Esophagus muscularis mucosa (tissue), 4 donors: ENCODE measurements at regions of chr4 and their contacts with region 1.

Region 1: GRCh38 chr4:168877511-168878491 is 132.3 kb downstream of the CBR4 start:
- DNase-seq: no peak
- H3K4me3 ChIP-seq: peak overlapping the region; percentile 53 to 64 (median 56)
- H3K27ac ChIP-seq: peak overlapping the region; percentile 84 to 90 (median 87)
- H3K4me1 ChIP-seq: peaks cover 57 to 100% (median 99%) of the 10 kb centered on the region in 4 donors
- H3K27me3 ChIP-seq: no peaks in the 10 kb centered on the region
- CTCF ChIP-seq: no peak
- EP300 ChIP-seq: no peak
- POLR2A ChIP-seq: no peak

Region 2: GRCh38 chr4:168841000-168841671 is 36.7 kb before region 1 on chr4:
- intact Hi-C with region 1: loop called (anchors 5 kb)
- DNase-seq: no peak
- H3K4me3 ChIP-seq: peak overlapping the region; percentile 4 to 89 (median 52)
- H3K27ac ChIP-seq: peak overlapping the region; percentile 97 to 99 (median 99)
- H3K4me1 ChIP-seq: peaks cover 69 to 99% (median 97%) of the 10 kb centered on the region in 4 donors
- H3K27me3 ChIP-seq: no peaks in the 10 kb centered on the region
- CTCF ChIP-seq: no peak
- EP300 ChIP-seq: no peak
- POLR2A ChIP-seq: no peak

Region 3: GRCh38 chr4:168857546-168858314 is 20.1 kb before region 1 on chr4:
- intact Hi-C with region 1: loop called (anchors 1 kb)
- DNase-seq: no peak
- H3K4me3 ChIP-seq: peak overlapping the region in 2 of 4 donors; percentile 16 to 25
- H3K27ac ChIP-seq: peak overlapping the region; percentile 97 to 99 (median 99)
- H3K4me1 ChIP-seq: peaks cover 84 to 100% (median 99%) of the 10 kb centered on the region in 4 donors
- H3K27me3 ChIP-seq: no peaks in the 10 kb centered on the region
- CTCF ChIP-seq: no peak
- EP300 ChIP-seq: no peak
- POLR2A ChIP-seq: no peak

Region 4: DNA sequence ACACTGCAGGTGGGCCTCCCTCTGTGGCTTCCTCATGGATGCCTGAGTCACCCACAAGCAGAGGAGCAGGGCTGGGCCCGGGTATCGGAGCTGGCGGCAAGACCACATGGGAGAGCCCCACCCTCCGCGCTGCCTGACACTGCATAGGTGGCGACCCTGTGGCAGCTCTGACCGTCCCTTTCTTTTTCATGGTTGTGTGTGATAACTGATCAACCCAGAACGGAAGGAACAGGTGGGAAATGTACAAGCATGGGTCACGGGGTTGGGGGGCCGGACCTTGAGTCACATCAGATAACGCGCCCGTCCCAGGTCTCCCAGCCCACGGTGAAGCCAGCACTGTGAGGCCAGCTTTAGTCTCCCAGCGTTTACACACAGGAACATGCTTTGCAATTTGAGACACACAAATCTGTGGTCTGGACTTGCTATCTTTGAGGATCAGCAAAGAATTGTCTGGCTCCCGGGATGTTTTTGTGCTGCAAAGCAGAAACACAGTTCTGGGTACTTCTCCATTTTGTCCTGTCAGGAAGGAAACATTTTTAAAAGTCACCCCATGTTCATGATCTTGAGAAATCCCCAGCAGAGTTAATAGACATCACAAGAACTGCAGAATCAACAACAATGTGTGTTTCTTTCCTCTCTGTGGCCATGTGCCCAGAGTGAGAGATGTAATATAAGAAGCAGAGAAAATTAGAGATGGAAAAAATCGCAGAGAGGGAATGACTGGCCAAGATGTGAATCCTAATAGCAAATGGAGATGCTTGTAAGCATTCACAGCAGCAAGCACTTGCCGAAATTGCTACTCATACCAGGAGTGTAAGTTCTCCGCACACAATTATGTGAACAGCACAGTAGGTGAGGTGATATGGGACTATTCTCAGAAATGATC is 202.4 kb after region 1 on chr4:
- intact Hi-C with region 1: no loop called
- DNase-seq: no peak
- H3K4me3 ChIP-seq: peak overlapping the region; percentile 4 to 37 (median 16)
- H3K27ac ChIP-seq: peak overlapping the region; percentile 47 to 72 (median 66)
- H3K4me1 ChIP-seq: peaks cover 15 to 29% (median 23%) of the 10 kb centered on the region in 4 donors
- H3K27me3 ChIP-seq: no peaks in the 10 kb centered on the region
- CTCF ChIP-seq: no peak
- EP300 ChIP-seq: no peak
- POLR2A ChIP-seq: no peak

Region 5: GRCh38 chr4:169103966-169104447 is 226.2 kb after region 1 on chr4:
- intact Hi-C with region 1: no loop called
- DNase-seq: no peak
- H3K4me3 ChIP-seq: no peak overlapping the region
- H3K27ac ChIP-seq: no peak overlapping the region
- H3K4me1 ChIP-seq: peaks cover 18 to 30% (median 27%) of the 10 kb centered on the region in 4 donors
- H3K27me3 ChIP-seq: no peaks in the 10 kb centered on the region
- CTCF ChIP-seq: no peak
- EP300 ChIP-seq: no peak
- POLR2A ChIP-seq: no peak